ENCODE measurements at regions of chr21 and their contacts with region 1.

Region 1: DNA sequence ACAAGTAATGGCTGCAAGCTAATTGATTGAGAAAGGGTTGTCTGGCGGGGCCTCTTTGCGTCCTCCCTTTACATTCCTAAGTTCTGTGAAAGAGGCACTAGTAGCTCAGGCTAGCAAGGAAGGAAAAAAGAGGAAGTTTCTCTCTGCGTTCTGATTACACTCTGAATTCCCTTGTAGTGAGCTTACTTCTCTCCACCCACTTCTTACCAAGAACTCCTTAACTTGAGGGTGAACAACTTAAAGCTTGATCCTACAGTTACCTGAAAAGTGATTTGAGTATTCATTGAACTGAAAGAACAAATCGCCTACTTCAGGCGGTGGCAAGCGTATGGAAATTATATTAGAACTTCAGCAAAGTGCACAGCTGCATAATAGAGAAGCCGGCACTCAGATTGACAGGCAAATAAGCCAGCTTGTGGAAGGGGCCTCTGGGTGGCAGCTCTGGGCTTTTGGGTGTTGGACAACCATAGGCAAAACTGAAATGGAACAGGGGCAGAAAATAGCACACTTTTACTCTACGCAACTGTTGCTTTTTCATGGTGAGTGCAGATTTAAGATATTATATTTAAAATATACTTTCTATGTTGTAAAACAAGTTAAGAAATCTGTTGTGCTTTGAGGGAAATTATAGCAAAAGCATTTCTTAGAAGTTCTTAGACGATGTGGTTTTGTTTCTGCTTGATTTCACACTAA is 464.5 kb downstream of the USP25 start:
- DNase-seq: peak; percentile 70 to 88 (median 79)
- ATAC-seq: peak; percentile 88 to 93
- H3K4me3 ChIP-seq: peak overlapping the region; percentile 95
- H3K27ac ChIP-seq: peak overlapping the region; percentile 79
- H3K4me1 ChIP-seq: peaks cover 5% of the 10 kb centered on the region
- H3K27me3 ChIP-seq: no peaks in the 10 kb centered on the region

Region 2: DNA sequence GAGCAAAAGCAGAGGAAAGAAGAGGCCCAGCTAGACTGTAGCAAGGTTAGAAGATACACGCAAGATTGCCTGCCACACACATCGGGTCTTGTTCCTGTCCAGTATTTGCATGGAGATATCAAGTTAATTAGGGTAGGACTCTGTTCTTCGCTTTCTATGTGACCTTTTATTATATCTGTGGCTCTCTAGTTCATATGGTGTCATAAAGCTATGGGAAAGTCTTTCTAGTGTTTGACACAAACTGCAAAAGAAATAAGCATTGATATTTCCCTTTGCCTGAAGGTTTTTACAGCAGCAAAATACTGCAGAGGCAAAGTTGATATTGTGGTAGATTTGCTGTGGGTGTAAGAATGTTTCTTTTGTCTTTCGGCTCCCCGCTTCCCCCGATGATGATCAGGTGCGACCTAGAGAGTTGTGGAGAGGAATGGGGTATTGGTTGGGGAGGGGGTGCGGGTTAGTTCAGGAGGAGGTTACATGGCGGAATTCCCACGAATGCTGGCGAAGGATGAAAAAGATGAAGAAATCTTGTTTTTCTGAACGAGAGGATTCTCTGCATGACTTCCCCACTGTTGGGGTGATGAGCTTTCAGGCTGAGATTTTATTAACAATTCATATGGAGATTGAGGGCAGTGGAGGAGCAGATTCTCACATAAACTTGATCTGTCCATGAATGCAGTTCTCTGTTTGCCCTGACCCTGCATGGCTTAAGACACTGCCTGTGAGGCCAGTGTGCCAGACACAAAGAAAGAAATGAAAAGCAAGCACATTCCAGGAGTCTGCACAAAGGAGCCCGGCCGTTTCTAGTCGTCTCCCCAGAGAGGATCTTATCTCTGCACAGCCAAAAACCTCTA is 85.7 kb after region 1 on chr21:
- intact Hi-C with region 1: loop called in 1 of 4 experiments (anchors 10 kb)
- DNase-seq: peak; percentile 29 to 70 (median 57)
- ATAC-seq: peak; percentile 94 to 96
- H3K4me3 ChIP-seq: peak overlapping the region; percentile 56
- H3K27ac ChIP-seq: peak overlapping the region; percentile 78
- H3K4me1 ChIP-seq: peaks cover 3% of the 10 kb centered on the region
- H3K27me3 ChIP-seq: no peaks in the 10 kb centered on the region

Region 3: GRCh38 chr21:16308269-16308668 is 114.0 kb after region 1 on chr21:
- intact Hi-C with region 1: loop called in 1 of 4 experiments (anchors 10 kb)
- DNase-seq: no peak
- ATAC-seq: peak; percentile 32 to 33
- H3K4me3 ChIP-seq: peak overlapping the region; percentile 63
- H3K27ac ChIP-seq: peak overlapping the region; percentile 75
- H3K4me1 ChIP-seq: peaks cover 2% of the 10 kb centered on the region
- H3K27me3 ChIP-seq: no peaks in the 10 kb centered on the region

Region 4: GRCh38 chr21:16426936-16427335 is 232.7 kb after region 1 on chr21:
- intact Hi-C with region 1: loop called in 1 of 4 experiments (anchors 5 kb)
- DNase-seq: no peak
- ATAC-seq: peak in 1 of 2 donors; percentile 28
- H3K4me3 ChIP-seq: no peak overlapping the region
- H3K27ac ChIP-seq: no peak overlapping the region
- H3K4me1 ChIP-seq: peaks cover 1% of the 10 kb centered on the region
- H3K27me3 ChIP-seq: no peaks in the 10 kb centered on the region

Measured in right cardiac atrium (tissue), 5 donors.